Left cardiac atrium (tissue), 4 donors: ENCODE measurements at regions of chr7 and their contacts with region 1.

Region 1: DNA sequence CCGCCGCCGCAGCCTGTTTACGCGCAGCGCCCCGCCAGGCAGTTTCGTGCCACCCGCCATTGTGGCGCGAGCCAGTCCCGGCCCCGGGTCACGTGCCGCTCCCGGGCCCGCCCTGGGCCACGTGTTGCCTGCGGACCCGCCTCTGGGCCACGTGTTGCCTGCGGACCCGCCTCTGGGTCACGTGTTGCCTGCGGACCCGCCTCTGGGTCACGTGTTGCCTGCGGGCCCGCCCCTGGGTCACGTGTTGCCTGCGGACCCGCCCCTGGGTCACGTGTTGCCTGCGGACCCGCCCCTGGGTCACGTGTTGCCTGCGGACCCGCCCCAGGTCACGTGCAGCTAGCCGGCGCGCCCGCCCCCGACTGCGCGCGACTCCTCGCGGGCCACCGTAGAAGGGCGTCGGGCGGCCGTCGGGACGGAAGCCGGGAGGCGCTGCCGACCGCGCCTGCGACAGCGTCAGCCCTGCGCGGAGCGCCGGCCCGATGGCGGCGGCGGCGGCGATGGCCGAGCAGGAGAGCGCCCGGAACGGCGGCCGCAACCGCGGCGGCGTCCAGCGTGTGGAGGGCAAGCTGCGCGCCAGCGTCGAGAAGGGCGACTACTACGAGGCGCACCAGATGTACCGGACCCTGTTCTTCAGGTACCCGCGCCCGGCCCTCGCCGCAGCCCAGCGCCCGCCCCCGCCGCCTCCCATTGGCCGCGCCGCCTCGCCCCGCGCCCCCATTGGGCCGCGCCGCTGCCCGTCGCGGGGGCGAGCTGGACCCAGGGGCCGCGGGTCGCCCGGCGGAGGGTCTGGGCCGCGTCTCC is at the start of gene GET4:
- DNase-seq: peak; percentile 97
- ATAC-seq: peak; percentile 79 to 88
- total RNA-seq, gene GET4: 17.8 to 28.3 TPM

Region 2: GRCh38 chr7:786472-787255 is 89.7 kb before region 1 on chr7:
- intact Hi-C with region 1: loop called (anchors 5 to 10 kb)
- DNase-seq: peak; percentile 77
- ATAC-seq: peak; percentile 77 to 80

Region 3: DNA sequence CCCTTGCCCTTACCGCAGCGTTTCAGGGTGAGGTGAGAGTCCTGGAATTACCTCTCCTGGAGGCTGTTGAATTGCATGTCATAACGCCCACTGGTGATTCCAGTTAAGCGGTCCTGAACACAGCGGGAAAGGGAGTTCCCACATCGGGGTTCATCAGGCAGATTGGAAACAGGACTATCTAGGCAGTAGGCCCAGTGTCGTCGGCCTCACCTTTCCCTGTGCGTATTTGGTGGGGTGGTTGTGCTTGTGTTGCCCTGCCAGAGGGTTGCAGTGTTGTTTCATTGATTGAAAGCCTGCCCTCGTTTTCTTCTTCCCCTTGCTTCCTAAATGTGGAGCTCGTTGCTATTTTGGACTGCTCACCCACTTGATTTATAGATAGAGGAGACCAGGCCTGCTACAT is 54.7 kb before region 1 on chr7:
- intact Hi-C with region 1: loop called (anchors 5 kb)
- DNase-seq: peak; percentile 18
- ATAC-seq: peak; percentile 31 to 65

Region 4: DNA sequence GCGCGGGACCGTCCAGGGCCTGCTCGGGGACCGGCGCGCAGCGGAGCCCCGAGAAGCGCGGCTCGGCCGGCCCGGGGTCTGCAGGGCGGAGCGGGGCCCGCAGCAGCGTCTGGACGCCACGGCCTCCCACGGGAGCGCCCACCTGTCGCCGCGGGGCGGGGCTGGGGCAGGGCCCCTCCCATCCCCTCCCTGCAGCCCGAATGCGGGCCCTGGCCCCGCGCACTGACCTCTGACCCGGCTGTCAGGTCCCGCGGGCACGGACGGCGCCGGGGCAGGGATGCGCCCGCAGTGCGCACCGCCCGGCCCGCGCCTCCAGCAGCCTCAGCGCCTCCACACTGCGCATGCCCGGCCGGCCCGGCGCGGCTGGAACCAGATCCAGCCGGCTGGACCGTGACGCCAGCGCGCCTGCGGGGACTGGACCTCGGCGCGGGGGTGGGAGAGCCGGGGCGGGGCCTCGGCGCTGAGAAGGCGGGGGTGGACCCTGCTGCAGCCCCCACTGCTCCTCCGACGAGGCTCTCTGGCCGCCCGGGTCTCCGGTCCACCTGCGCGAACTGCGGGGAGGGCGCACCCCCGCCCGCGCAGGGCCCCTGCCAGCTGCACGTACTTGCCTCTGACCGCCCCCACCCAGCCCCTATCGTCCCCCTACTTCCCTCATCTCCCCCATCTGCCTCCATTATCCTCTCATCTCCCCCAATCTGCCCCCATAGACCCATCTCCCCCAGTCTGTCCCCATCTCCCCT is 151.8 kb after region 1 on chr7:
- intact Hi-C with region 1: no loop called
- DNase-seq: peak; percentile 93
- ATAC-seq: peak; percentile 94